ENCODE measurements at regions of chr1 and their contacts with region 1.

Region 1: DNA sequence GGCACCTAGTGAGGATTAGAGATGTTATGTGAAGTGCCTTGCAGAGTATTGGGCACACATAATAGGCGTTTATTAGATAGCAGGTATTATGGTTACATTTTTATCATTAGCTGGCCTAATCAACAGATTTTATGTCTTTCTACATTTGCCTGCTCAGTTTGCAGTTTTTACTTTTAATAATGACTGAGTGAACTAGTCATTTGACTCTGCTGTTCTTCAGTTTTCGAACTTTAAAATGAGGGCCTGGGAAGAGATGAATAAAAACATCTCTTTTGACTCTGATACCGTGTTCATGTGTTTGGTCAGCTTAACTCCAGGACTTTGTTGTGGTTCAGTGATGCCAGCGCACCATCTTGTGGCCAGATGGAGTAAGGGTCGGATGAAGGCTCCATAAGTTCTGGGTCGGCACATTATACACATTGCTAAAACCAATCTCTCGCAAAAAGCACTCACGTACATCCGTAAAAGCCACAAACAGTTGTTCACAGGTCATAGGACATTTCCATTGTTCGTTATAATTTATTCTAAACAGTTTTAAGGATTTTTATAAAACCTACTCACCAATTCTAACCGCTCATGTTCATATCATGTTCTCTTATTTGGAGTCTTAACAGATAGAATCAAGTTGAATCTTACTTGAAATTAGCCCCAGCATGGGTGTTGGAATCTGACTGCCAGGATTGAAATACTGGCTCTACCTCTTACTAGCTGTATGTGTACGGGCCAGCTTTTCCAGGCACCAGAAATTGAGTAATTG is 78.4 kb upstream of the GPR88 start:
- DNase-seq: peak; percentile 69 to 73
- ATAC-seq: peak; percentile 70 to 91 (median 88)
- H3K4me3 ChIP-seq: no peak overlapping the region
- H3K27ac ChIP-seq: no peak overlapping the region
- H3K4me1 ChIP-seq: peaks cover 0 to 24% (median 8%) of the 10 kb centered on the region in 9 donors
- H3K27me3 ChIP-seq: no peaks in the 10 kb centered on the region
- CTCF ChIP-seq: peak; percentile 74 to 93 (median 86)

Region 2: DNA sequence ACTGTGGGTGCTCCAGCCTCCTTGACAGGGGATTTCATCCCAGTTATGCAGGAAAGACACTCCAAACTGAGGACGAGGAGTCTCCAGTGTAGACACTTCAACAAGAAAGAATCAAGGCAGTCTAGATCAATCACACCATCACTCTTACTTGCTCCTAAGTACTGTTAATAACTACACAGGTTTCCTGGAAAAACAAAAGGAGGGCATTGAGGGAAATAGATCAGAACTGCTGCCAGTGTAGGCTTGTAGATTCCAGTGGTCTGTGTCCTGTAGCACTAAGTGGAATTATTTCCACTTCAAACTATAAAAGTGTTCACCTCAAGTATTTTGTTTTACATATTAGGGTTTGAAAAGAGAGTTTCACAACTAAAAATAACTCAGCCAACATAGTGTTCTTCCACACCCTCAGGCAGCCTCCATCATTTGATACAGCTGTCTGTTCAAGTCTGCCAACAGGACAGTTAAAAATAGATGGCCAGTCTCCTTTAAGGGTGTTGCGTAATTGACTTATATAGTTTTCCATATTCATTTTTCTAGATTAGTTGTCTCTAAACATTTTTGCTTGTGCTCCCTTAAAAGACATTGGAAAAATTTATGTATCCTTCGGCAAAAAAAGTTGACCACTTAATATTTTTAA is 641.4 kb before region 1 on chr1:
- intact Hi-C with region 1: loop called in 2 of 10 experiments (anchors 5 kb)
- DNase-seq: peak in 1 of 2 donors; percentile 9
- ATAC-seq: peak; percentile 34 to 94 (median 84)
- H3K4me3 ChIP-seq: no peak overlapping the region
- H3K27ac ChIP-seq: peak overlapping the region in 4 of 10 donors; percentile 45 to 63 (median 56)
- H3K4me1 ChIP-seq: peaks cover 0 to 8% (median 0%) of the 10 kb centered on the region in 9 donors
- H3K27me3 ChIP-seq: peaks cover 0 to 5% (median 0%) of the 10 kb centered on the region in 7 donors
- CTCF ChIP-seq: no peak

Region 3: GRCh38 chr1:100249537-100250257 is 209.8 kb before region 1 on chr1 and contains the start of gene DBT:
- intact Hi-C with region 1: loop called in 2 of 10 experiments (anchors 10 kb)
- DNase-seq: peak; percentile 90 to 96
- ATAC-seq: peak; percentile 100
- H3K4me3 ChIP-seq: peak within 1 kb of the TSS; percentile 58 to 97 (median 79)
- H3K27ac ChIP-seq: peak within 1 kb of the TSS in 9 of 10 donors; percentile 77 to 95 (median 88)
- H3K4me1 ChIP-seq: peaks cover 0 to 27% (median 19%) of the 10 kb centered on the region in 9 donors
- H3K27me3 ChIP-seq: no peaks in the 10 kb centered on the region
- CTCF ChIP-seq: no peak
- total RNA-seq, gene DBT: 27.9 to 49.0 (median 38.8) TPM

Region 4: DNA sequence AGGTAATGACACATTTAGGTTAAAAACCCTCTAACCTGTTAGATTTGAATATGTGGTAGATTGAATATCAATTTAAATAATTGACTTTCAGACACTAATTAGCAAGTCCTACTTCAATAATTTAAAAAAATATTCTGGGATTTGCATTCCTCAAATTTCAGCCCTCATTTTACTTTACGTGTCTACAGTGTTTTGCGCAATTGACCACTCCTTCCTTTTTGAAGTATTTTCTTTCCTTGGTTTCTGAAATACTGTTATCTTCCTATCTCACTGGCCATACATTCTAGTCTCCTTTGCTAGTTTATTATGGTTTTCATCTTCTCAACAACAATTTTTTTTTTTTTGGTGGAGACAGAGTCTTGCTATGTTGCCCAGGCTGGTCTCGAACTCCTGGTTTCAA is 174.2 kb before region 1 on chr1:
- intact Hi-C with region 1: loop called in 4 of 10 experiments (anchors 5 kb)
- DNase-seq: no peak
- ATAC-seq: no peak
- H3K4me3 ChIP-seq: no peak overlapping the region
- H3K27ac ChIP-seq: no peak overlapping the region
- H3K4me1 ChIP-seq: peaks cover 0 to 8% (median 4%) of the 10 kb centered on the region in 9 donors
- H3K27me3 ChIP-seq: no peaks in the 10 kb centered on the region
- CTCF ChIP-seq: no peak

Region 5: GRCh38 chr1:100510451-100510850 is 50.9 kb after region 1 on chr1:
- intact Hi-C with region 1: no loop called
- DNase-seq: no peak
- ATAC-seq: peak in 1 of 8 donors; percentile 24
- H3K4me3 ChIP-seq: no peak overlapping the region
- H3K27ac ChIP-seq: peak overlapping the region in 1 of 10 donors; percentile 31
- H3K4me1 ChIP-seq: peaks cover 0 to 19% (median 0%) of the 10 kb centered on the region in 9 donors
- H3K27me3 ChIP-seq: no peaks in the 10 kb centered on the region
- CTCF ChIP-seq: no peak

Region 6: GRCh38 chr1:100530880-100531487 is 71.4 kb after region 1 on chr1:
- intact Hi-C with region 1: loop called in 2 of 10 experiments (anchors 2 to 10 kb)
- DNase-seq: peak in 1 of 2 donors; percentile 50
- ATAC-seq: peak; percentile 81 to 97 (median 90)
- H3K4me3 ChIP-seq: no peak overlapping the region
- H3K27ac ChIP-seq: peak overlapping the region in 9 of 10 donors; percentile 21 to 82 (median 59)
- H3K4me1 ChIP-seq: peaks cover 0 to 59% (median 17%) of the 10 kb centered on the region in 9 donors
- H3K27me3 ChIP-seq: peaks cover 0 to 12% (median 2%) of the 10 kb centered on the region in 7 donors
- CTCF ChIP-seq: no peak

Region 7: DNA sequence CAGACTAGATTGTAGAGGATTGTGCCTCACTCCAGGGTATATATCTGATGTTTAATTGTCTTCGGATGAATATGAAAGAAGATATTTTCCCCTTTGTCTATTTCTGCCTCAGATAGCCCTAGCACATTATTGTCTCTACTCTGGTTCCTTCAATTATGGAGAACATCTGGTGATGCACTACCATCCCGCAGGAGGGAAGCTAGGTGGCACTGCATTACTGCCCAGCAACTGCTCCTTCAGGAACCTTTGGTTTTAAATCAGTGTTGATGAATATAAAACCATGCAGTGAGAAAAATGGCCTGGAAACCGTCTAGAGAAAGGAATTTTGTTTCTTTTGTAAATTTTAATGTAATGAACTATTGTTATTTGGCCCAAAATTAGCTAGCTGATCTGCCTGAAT is 146.9 kb after region 1 on chr1:
- intact Hi-C with region 1: loop called in 5 of 10 experiments (anchors 5 to 10 kb)
- DNase-seq: peak; percentile 18 to 47
- ATAC-seq: peak in 7 of 8 donors; percentile 67 to 85 (median 77)
- H3K4me3 ChIP-seq: no peak overlapping the region
- H3K27ac ChIP-seq: no peak overlapping the region
- H3K4me1 ChIP-seq: peaks cover 0 to 3% (median 0%) of the 10 kb centered on the region in 9 donors
- H3K27me3 ChIP-seq: no peaks in the 10 kb centered on the region
- CTCF ChIP-seq: peak in 8 of 9 donors; percentile 45 to 80 (median 76)